ENCODE measurements at regions of chr17 and their contacts with region 1.

Region 1: DNA sequence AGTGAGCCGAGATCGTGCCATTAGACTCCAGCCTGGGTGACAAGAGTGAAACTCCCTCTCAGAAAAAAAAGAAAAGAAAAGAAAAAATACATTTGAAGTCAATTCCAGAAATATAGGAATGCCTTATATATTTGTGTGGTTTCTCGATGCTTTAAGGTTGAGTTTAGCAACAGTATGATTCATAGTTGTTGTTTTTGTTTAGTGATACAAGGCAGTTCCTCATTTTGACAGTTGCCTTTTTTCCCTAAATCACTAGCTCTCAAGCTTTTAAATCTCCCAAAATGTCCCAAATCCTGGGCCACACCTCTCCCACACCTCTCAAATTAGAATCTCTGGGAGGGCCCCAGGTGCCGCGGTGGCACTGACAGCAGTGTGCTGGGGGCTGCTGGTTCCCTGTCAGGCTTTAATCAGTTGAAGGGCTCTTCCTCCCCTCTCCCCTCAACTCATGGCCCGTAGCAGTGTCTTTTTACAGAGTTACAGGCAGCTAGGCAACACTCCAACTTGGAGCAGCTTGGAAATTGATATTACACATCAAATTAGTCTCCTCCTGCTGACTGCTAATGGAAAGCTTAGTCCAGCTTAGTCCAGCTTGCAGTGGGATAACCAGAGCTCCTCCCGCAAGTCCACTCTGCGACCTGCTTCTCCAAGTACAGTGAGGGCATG is 58.4 kb downstream of the EPN2 start:
- DNase-seq: no peak
- H3K4me3 ChIP-seq: no peak overlapping the region
- H3K27ac ChIP-seq: peak overlapping the region in 39 of 59 donors; percentile 3 to 100 (median 59)
- H3K27me3 ChIP-seq: no peaks in the 10 kb centered on the region
- CTCF ChIP-seq: no peak

Region 2: DNA sequence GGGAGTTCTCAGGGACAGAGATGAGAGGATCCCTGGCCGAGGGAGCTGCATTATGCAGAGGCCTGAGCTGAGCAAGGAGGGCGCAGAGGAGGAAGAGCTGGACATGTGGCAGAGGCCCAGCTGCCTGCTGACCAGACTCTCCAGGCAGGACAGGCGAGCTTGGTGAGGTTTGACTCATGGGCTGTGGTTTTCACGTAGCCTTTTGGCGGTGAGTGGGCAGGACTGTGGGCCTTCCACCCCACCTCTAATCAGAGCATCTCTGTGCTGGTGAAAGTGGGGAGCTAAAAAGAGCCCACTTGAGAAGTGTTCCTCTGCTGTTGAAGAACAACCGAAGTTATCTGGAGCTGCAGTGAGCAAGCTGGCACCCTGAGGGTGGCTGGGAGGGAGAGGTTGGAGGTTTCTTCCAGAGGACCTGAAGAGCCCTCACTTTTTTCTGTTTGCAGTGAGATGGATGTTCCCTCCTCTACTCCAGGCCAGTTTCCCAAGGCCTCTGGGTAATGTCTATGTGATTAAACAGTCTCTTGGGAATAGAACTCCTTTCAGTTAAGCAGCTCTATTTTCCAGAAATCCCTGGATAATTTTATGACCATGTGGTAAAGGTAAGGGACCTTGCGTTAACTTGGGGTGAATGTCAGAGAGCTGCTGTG is 46.6 kb before region 1 on chr17:
- intact Hi-C with region 1: no loop called
- DNase-seq: peak in 7 of 10 donors; percentile 44 to 77 (median 60)
- H3K4me3 ChIP-seq: peak overlapping the region in 2 of 59 donors; percentile 13
- H3K27ac ChIP-seq: peak overlapping the region; percentile 75 to 98 (median 93)
- H3K27me3 ChIP-seq: no peaks in the 10 kb centered on the region
- CTCF ChIP-seq: peak in 2 of 56 donors; percentile 11 to 13

Region 3: DNA sequence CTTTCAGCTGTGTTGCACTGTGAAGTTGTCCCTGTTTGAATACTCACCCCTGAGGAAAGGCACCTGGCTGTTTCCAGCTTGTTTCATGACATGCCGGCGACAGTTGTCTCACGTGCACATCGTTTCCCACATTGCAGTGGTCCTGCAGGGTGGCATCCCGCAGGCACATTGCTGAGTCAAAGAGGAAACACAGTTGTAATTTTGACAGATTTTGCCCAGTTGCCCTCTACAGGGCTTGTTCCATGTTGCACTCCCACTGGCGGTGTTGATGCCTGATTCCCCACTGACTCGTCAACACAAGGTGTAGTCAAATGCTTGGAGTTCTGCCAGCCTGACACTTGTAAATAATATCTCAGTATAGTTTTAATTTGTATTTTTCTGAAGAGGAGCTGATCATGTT is 34.6 kb before region 1 on chr17:
- intact Hi-C with region 1: loop called in 1 of 2 experiments (anchors 5 kb)
- DNase-seq: no peak
- H3K4me3 ChIP-seq: no peak overlapping the region
- H3K27ac ChIP-seq: peak overlapping the region in 53 of 59 donors; percentile 2 to 96 (median 84)
- H3K27me3 ChIP-seq: no peaks in the 10 kb centered on the region
- CTCF ChIP-seq: peak in 28 of 56 donors; percentile 12 to 46 (median 26)

Region 4: DNA sequence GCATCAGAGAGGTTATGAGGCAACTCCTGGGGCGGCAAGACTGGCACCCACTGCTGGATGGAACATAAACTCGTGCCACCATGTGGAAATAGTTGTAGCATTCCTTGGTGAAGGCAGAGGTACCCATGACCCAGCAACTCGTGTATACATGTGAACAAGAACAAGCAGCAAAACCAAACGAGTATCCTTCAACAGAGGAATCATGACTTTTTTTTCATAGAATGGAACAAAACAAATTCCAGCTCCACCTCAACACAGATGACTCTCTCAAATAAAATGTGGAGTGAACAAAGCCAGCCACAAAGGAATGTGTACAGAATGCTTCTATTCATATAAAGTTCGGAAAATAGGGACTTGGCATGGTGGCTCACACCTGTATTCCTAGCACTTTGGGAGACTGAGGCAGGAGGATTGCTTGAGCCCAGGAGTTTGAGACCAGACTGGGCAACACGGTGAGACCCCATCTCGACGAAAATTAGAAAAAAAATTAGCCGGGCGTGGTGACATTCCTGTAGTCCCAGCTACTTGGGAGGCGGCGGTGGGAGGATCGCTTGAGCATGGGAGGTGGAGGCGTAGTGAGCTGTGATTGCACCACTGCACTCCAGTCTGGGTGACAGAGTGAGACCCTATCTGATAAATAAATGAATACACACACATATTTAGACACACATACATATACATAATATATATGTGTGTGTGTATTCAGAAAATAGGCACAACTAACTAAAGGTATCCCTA is 31.6 kb after region 1 on chr17:
- intact Hi-C with region 1: no loop called
- DNase-seq: peak in 4 of 10 donors; percentile 5 to 28 (median 11)
- H3K4me3 ChIP-seq: no peak overlapping the region
- H3K27ac ChIP-seq: peak overlapping the region in 3 of 59 donors; percentile 10 to 36 (median 35)
- H3K27me3 ChIP-seq: no peaks in the 10 kb centered on the region
- CTCF ChIP-seq: no peak

Region 5: DNA sequence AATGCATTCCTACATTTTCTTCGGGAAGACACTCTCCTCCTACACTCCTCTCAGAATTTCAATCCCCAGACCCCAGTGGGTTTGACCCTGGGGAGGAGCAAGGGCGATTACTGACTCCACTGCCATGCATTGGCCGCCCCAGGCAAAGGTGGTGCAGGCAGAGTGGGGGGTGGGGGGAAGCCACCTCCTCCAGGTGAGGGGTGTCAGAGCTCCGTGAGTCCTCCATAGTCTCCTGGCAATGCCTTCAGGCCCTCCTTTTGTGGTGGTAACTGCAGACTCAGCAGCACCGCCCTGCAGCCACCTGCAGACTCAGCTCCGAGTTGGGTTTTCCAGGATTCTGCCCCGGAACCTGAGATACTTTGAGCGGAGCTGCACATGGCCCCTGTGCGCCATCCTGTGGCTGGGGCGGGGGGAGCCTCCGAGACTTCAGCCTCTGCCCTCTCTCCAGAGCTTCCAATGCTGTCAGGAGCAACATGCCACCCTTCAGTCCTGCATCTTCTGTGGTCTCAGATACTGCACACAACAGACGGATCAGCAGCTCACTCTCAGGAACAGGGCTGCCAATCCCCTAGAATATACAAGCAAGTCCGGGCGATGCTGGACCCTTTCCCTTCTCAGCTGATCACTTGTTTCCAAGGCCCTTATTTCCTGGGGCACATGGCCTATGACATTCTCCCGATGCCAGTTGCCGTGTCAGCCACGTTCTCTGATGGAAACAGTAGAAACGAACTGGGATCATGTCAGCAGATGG is 423.2 kb after region 1 on chr17:
- intact Hi-C with region 1: no loop called
- DNase-seq: no peak
- H3K4me3 ChIP-seq: no peak overlapping the region
- H3K27ac ChIP-seq: no peak overlapping the region
- H3K27me3 ChIP-seq: no peaks in the 10 kb centered on the region
- CTCF ChIP-seq: no peak

Measured in dorsolateral prefrontal cortex (tissue), 120 donors.